ENCODE measurements at regions of chr6 and their contacts with region 1.

Region 1: DNA sequence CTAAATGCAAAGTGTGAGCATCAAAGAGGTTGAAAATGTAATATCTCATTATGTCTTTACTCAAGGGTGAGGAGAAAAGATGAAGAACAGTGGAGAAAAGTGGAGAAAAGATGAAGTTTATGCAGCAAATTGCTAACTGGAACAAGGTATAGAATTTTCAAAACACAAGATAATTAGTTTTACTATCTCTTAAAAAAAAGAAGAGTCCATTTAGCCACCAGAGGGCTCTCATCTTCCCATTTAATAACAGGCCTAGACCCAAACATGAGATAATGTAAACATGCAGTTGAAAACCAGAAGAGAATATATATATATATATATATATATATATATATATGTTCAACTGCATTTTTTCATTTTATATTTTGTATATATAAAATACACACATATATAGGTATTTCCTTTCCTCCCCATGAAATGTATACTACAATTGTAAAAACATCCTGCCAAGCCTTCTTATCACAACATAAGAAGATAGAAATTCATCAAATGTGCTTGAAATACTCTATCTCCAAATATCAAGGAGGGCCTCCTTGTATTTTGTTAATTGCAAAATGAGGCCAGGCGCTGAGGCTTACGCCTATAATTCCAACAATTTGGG is 78.4 kb downstream of the ADTRP start:
- DNase-seq: peak; percentile 29
- H3K4me3 ChIP-seq: no peak overlapping the region
- H3K27ac ChIP-seq: no peak overlapping the region
- H3K4me1 ChIP-seq: peaks cover 14% of the 10 kb centered on the region
- H3K27me3 ChIP-seq: no peaks in the 10 kb centered on the region
- CTCF ChIP-seq: peak; percentile 23 to 58

Region 2: DNA sequence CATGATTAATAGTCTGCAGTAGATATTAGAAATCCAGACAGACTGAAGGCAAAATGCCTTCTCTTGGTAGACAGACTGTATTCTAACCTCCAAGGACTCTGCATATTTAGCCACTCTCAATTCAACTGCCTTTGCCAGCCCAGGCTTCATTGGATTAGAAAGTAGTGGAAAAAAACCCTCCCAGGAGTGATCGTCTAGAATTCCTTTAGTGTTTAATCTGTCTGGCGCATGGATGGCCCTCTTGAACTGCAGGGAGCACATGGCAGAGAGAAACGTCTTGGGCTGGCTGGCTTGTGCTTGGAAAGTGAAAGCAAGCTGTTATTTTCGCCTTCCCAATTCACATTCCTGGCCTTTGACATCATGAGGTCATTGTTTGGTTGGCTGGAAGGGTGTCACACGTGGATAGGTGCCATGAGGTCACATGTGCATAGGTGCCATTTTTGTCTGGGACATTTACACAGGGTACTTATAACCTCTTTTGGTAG is 436.9 kb before region 1 on chr6:
- CTCF ChIA-PET with region 1: no interaction called
- dilution Hi-C with region 1: no loop called
- in situ Hi-C with region 1: no loop called
- intact Hi-C with region 1: no loop called
- DNase-seq: peak; percentile 62
- H3K4me3 ChIP-seq: no peak overlapping the region
- H3K27ac ChIP-seq: no peak overlapping the region
- H3K4me1 ChIP-seq: no peaks in the 10 kb centered on the region
- H3K27me3 ChIP-seq: no peaks in the 10 kb centered on the region
- CTCF ChIP-seq: no peak

Region 3: GRCh38 chr6:11921017-11921438 is 220.8 kb after region 1 on chr6:
- CTCF ChIA-PET with region 1: no interaction called
- dilution Hi-C with region 1: no loop called
- in situ Hi-C with region 1: no loop called
- intact Hi-C with region 1: loop called (anchors 10 kb)
- DNase-seq: peak; percentile 90
- H3K4me3 ChIP-seq: no peak overlapping the region
- H3K27ac ChIP-seq: peak overlapping the region; percentile 37
- H3K4me1 ChIP-seq: peaks cover 13% of the 10 kb centered on the region
- H3K27me3 ChIP-seq: no peaks in the 10 kb centered on the region
- CTCF ChIP-seq: no peak